Activated CD4-positive, alpha-beta memory T cell treated with anti-CD3 and anti-CD28 coated beads, Interleukin-2, amount 10 ng/mL, durations not matched to agents 7 days and 5 days (primary cell): ENCODE measurements at regions of chr12 and their contacts with region 1.

Region 1: GRCh38 chr12:68686595-68687521 is at the start of gene NUP107:
- DNase-seq: peak; percentile 97
- H3K4me3 Mint-ChIP-seq: peak within 1 kb of the TSS; percentile 96
- H3K27ac Mint-ChIP-seq: peak within 1 kb of the TSS; percentile 92
- H3K4me1 Mint-ChIP-seq: peaks cover 45% of the 10 kb centered on the region
- H3K27me3 Mint-ChIP-seq: no peaks in the 10 kb centered on the region
- total RNA-seq, gene NUP107: 80.7 to 85.4 TPM

Region 2: GRCh38 chr12:68675101-68675842 is 11.6 kb before region 1 on chr12:
- CTCF ChIA-PET with region 1: interaction called, 4 read pairs
- POLR2A ChIA-PET with region 1: interaction called, 12 read pairs
- DNase-seq: peak; percentile 82
- H3K4me3 Mint-ChIP-seq: peak overlapping the region; percentile 33
- H3K27ac Mint-ChIP-seq: peak overlapping the region; percentile 93
- H3K4me1 Mint-ChIP-seq: peaks cover 48% of the 10 kb centered on the region
- H3K27me3 Mint-ChIP-seq: no peaks in the 10 kb centered on the region

Region 3: DNA sequence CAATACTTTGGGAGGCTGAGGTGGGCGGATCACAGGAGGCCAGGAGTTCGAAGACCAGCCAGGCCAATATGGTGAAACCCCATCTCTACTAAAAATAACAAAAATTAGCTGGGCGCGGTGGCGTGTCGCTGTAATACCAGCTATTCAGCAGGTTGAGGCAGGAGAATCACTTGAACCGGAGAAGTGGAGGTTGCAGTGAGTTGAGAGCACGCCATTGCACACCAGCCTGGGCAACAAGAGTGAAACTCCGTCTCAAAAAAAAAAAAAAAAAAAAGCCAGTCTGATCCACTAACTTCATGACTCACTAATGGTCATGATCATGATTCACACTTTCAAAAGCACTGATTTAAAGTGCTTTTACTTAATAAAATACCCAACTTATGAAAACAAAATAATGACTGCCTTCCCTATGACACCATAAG is 284.5 kb after region 1 on chr12:
- CTCF ChIA-PET with region 1: no interaction called
- POLR2A ChIA-PET with region 1: no interaction called
- DNase-seq: no peak
- H3K4me3 Mint-ChIP-seq: no peak overlapping the region
- H3K27ac Mint-ChIP-seq: no peak overlapping the region
- H3K4me1 Mint-ChIP-seq: no peaks in the 10 kb centered on the region
- H3K27me3 Mint-ChIP-seq: peaks cover 2% of the 10 kb centered on the region